Activated CD4-positive, alpha-beta T cell treated with anti-CD3 and anti-CD28 coated beads, Interleukin-2, amount 10 ng/mL, durations not matched to agents 24 days and 14 days (primary cell): ENCODE measurements at regions of chr12 and their contacts with region 1.

Region 1: GRCh38 chr12:92649511-92650227 is 53.1 kb upstream of the PLEKHG7 start:
- DNase-seq: peak; percentile 87
- H3K4me3 Mint-ChIP-seq: no peak overlapping the region
- H3K27ac Mint-ChIP-seq: no peak overlapping the region
- H3K4me1 Mint-ChIP-seq: peaks cover 8% of the 10 kb centered on the region
- H3K27me3 Mint-ChIP-seq: no peaks in the 10 kb centered on the region

Region 2: GRCh38 chr12:91361864-91362263 is 1287.8 kb before region 1 on chr12:
- intact Hi-C with region 1: loop called (anchors 5 kb)
- DNase-seq: no peak
- H3K4me3 Mint-ChIP-seq: no peak overlapping the region
- H3K27ac Mint-ChIP-seq: no peak overlapping the region
- H3K4me1 Mint-ChIP-seq: peaks cover 4% of the 10 kb centered on the region
- H3K27me3 Mint-ChIP-seq: peaks cover 18% of the 10 kb centered on the region

Region 3: GRCh38 chr12:91382081-91382543 is 1267.6 kb before region 1 on chr12:
- intact Hi-C with region 1: loop called (anchors 1 kb)
- DNase-seq: peak; percentile 94
- H3K4me3 Mint-ChIP-seq: peak overlapping the region; percentile 84
- H3K27ac Mint-ChIP-seq: peak overlapping the region; percentile 39
- H3K4me1 Mint-ChIP-seq: peaks cover 7% of the 10 kb centered on the region
- H3K27me3 Mint-ChIP-seq: peaks cover 12% of the 10 kb centered on the region

Region 4: GRCh38 chr12:91577586-91578539 is 1071.8 kb before region 1 on chr12:
- intact Hi-C with region 1: loop called (anchors 2 kb)
- DNase-seq: no peak
- H3K4me3 Mint-ChIP-seq: peak overlapping the region; percentile 74
- H3K27ac Mint-ChIP-seq: no peak overlapping the region
- H3K4me1 Mint-ChIP-seq: peaks cover 5% of the 10 kb centered on the region
- H3K27me3 Mint-ChIP-seq: peaks cover 3% of the 10 kb centered on the region

Region 5: DNA sequence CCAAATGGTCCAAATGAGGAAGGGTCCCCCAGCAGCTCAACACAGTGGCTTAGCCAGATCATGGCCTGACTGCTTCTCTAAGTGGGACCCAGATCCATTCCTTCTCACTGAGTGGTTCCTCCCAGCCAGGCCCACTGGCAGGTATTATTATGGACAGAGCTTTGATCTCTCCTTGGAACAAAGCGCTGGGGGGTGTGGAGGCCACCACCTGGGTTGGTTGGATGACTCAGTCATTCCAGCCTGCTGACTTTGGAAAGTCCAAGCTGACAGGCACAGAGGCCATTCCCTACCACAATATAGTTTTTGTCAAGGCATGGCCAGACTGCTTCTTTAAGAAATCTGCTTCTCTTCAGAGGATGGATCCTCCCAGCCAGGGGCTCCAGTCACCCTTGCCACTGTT is 845.1 kb before region 1 on chr12:
- intact Hi-C with region 1: loop called (anchors 10 kb)
- DNase-seq: no peak
- H3K4me3 Mint-ChIP-seq: no peak overlapping the region
- H3K27ac Mint-ChIP-seq: no peak overlapping the region
- H3K4me1 Mint-ChIP-seq: peaks cover 6% of the 10 kb centered on the region
- H3K27me3 Mint-ChIP-seq: no peaks in the 10 kb centered on the region